Lower leg skin (tissue), 4 donors: ENCODE measurements at regions of chr2 and their contacts with region 1.

Region 1: GRCh38 chr2:68870215-68870614 is 982 bp downstream of the BMP10 start:
- DNase-seq: no peak
- H3K4me3 ChIP-seq: no peak overlapping the region
- CTCF ChIP-seq: no peak
- POLR2A ChIP-seq: no peak

Region 2: GRCh38 chr2:68824831-68825230 is 45.4 kb before region 1 on chr2:
- intact Hi-C with region 1: loop called (anchors 1 kb)
- DNase-seq: no peak
- H3K4me3 ChIP-seq: no peak overlapping the region
- CTCF ChIP-seq: no peak
- POLR2A ChIP-seq: no peak